WTC11 (cell line): ENCODE measurements at regions of chr6 and their contacts with region 1.

Region 1: GRCh38 chr6:83067448-83068413 is at the start of gene DOP1A:
- DNase-seq: peak; percentile 98
- ATAC-seq: peak; percentile 79
- H3K4me3 Mint-ChIP-seq: peak within 1 kb of the TSS; percentile 88
- H3K27ac Mint-ChIP-seq: peak within 1 kb of the TSS; percentile 98
- H3K4me1 Mint-ChIP-seq: peaks cover 52% of the 10 kb centered on the region
- H3K27me3 Mint-ChIP-seq: no peaks in the 10 kb centered on the region
- CTCF ChIP-seq: peak; percentile 83
- total RNA-seq, gene DOP1A: 13.1 to 16.9 TPM (median 15.1 TPM) in 3 replicates

Region 2: GRCh38 chr6:82363351-82364086 is 704.2 kb before region 1 on chr6 and contains the start of gene TPBG:
- CTCF ChIA-PET with region 1: interaction called, 10 read pairs
- POLR2A ChIA-PET with region 1: interaction called, 9 read pairs
- DNase-seq: peak; percentile 92
- ATAC-seq: peak; percentile 78
- H3K4me3 Mint-ChIP-seq: peak within 1 kb of the TSS; percentile 93
- H3K27ac Mint-ChIP-seq: peak within 1 kb of the TSS; percentile 97
- H3K4me1 Mint-ChIP-seq: peaks cover 26% of the 10 kb centered on the region
- H3K27me3 Mint-ChIP-seq: peaks cover 3% of the 10 kb centered on the region; the same call in 1 of the 2 replicates
- CTCF ChIP-seq: 0 out of 2 replicates have a peak, but pooled peaks have one; percentile 3
- total RNA-seq, gene TPBG: 29.6 to 35.3 TPM (median 30.4 TPM) in 3 replicates

Region 3: DNA sequence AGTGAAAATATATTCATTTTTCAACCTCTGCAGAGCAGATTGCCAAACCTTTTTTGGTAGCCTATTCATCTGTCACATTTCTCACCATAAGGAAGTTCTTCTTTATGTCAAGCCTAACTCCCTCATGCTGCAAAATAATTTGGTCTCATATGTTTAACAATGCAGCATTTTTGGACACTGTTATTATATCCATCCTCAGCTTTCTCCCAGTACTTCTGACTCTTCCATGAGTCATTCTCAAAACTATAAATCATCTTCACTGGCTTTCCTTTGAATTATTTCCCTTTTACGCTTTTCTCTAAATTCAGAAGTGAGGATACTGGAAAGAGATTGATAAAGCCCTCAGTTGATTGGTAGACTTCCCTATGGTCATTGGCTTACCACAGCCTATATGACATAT is 511.9 kb before region 1 on chr6:
- CTCF ChIA-PET with region 1: no interaction called
- POLR2A ChIA-PET with region 1: no interaction called
- DNase-seq: no peak
- ATAC-seq: no peak
- H3K4me3 Mint-ChIP-seq: no peak overlapping the region
- H3K27ac Mint-ChIP-seq: no peak overlapping the region
- H3K4me1 Mint-ChIP-seq: peaks cover 16% of the 10 kb centered on the region
- H3K27me3 Mint-ChIP-seq: no peaks in the 10 kb centered on the region
- CTCF ChIP-seq: no peak

Region 4: GRCh38 chr6:82980086-82980485 is 87.6 kb before region 1 on chr6:
- CTCF ChIA-PET with region 1: no interaction called
- POLR2A ChIA-PET with region 1: no interaction called
- DNase-seq: no peak
- ATAC-seq: no peak
- H3K4me3 Mint-ChIP-seq: no peak overlapping the region
- H3K27ac Mint-ChIP-seq: no peak overlapping the region
- H3K4me1 Mint-ChIP-seq: peaks cover 5% of the 10 kb centered on the region; the same call in 1 of the 2 replicates
- H3K27me3 Mint-ChIP-seq: no peaks in the 10 kb centered on the region
- CTCF ChIP-seq: no peak

Region 5: DNA sequence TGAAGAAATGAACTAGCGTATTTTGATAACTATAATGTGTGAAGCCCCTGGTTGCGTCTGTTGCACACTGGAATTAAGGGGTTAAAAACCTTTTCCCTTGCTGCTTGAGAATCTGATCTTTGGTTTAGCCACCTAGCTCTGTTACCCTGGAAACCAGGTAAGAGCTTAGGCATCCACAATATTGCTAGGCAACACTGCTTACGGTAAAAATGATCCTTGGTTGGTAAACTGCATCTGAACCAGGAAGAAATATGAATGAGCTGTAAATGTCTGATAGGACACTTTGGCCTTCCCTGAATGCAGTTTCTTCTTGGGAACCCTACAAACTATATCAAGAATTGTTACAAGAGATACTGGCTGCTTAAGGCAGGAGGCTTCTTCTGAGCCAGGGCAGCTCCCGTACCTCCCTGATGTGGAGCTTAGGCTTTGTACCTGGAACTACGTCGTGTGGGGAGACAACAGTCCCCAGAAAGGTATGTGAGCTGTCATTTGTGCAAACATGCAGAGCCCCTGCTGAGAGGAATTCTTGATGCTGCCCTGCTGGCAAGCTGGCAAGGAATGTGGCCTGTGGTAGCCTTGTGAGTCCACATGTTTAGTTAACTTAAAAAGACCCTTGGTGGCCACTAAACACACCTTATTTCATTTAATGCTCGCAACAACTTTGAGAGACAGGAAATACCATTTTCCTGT is 20.5 kb before region 1 on chr6:
- CTCF ChIA-PET with region 1: interaction called, 11 read pairs
- POLR2A ChIA-PET with region 1: no interaction called
- DNase-seq: peak; percentile 51
- ATAC-seq: peak; percentile 80
- H3K4me3 Mint-ChIP-seq: no peak overlapping the region
- H3K27ac Mint-ChIP-seq: peak overlapping the region; percentile 52; the same call in 1 of the 2 replicates
- H3K4me1 Mint-ChIP-seq: peaks cover 36% of the 10 kb centered on the region
- H3K27me3 Mint-ChIP-seq: no peaks in the 10 kb centered on the region
- CTCF ChIP-seq: no peak

Region 6: DNA sequence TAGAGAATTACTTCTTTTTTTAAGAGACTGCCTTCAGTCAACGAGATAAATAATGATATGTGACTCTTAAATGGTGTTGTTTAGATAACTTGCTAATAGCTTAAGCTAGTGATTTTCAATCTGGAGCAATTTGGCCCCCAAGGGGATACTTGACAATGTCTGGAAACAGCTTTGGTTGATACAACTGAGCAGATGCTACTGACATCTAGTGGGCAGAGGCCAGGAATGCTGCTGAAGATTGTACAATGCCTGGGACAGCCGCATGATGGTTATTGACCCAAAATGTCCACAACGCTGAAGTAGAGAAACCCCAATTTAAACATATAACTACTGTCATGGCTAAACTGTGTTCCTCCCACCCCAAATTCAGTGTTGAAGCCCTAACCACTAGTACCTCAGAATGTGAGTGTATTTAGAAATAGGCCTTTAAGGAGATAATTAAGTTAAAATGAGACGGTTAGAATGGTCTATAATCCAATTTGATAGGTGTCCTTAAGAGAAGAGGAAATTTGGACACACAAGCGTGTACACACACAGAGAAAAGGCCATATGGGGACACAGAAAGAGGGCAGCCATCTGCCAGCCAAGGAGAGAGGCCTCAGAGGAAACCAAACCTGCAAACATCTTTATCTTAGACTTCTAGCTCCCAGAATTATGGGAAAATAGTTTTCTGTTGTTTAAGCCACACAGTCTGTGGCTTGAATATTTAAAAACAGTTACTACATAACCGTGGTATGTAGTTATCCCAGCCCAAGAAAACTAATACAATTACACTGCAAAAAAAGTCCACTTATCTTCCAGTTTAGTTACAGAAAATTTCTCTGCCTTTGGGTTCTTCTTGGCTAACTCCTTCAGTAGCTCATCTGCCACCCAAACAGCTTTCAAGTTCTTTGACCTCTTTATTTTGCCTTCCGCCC is 147.7 kb after region 1 on chr6:
- CTCF ChIA-PET with region 1: interaction called, 60 read pairs
- POLR2A ChIA-PET with region 1: interaction called, 4 read pairs
- DNase-seq: peak; percentile 49
- ATAC-seq: peak; percentile 97
- H3K4me3 Mint-ChIP-seq: no peak overlapping the region
- H3K27ac Mint-ChIP-seq: no peak overlapping the region
- H3K4me1 Mint-ChIP-seq: no peaks in the 10 kb centered on the region
- H3K27me3 Mint-ChIP-seq: no peaks in the 10 kb centered on the region
- CTCF ChIP-seq: peak; percentile 44